A673 (cell line): ENCODE measurements at regions of chr21 and their contacts with region 1.

Region 1: GRCh38 chr21:42469272-42469671 is 26.8 kb downstream of the RSPH1 start:
- DNase-seq: no peak
- H3K4me3 ChIP-seq: no peak overlapping the region
- H3K27ac ChIP-seq: peak overlapping the region; percentile 15
- H3K4me1 ChIP-seq: peaks cover 38% of the 10 kb centered on the region
- H3K27me3 ChIP-seq: no peaks in the 10 kb centered on the region
- CTCF ChIP-seq: no peak

Region 2: DNA sequence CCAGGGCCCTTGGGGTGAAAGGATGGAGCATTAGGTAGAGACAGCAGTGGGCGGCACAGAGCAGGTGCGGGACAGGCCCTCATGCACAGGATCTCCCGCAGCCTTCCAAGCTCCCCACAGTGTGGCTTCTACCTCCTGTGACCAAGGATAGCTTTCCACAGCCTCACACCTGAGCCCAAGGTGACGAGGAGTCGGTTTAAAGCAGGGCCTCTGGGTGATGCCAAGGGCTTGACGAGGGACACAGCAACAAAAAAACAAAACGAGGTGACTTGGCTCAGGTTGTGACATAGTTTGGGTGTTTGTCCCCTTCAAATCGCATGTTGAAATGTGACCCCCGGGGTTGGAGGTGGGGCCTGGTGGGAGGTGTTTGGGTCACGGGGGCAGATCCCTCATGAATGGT is 11.5 kb after region 1 on chr21:
- CTCF ChIA-PET with region 1: no interaction called
- POLR2A ChIA-PET with region 1: no interaction called
- intact Hi-C with region 1: loop called (anchors 1 kb)
- DNase-seq: no peak
- H3K4me3 ChIP-seq: no peak overlapping the region
- H3K27ac ChIP-seq: no peak overlapping the region
- H3K4me1 ChIP-seq: no peaks in the 10 kb centered on the region
- H3K27me3 ChIP-seq: no peaks in the 10 kb centered on the region
- CTCF ChIP-seq: no peak

Region 3: DNA sequence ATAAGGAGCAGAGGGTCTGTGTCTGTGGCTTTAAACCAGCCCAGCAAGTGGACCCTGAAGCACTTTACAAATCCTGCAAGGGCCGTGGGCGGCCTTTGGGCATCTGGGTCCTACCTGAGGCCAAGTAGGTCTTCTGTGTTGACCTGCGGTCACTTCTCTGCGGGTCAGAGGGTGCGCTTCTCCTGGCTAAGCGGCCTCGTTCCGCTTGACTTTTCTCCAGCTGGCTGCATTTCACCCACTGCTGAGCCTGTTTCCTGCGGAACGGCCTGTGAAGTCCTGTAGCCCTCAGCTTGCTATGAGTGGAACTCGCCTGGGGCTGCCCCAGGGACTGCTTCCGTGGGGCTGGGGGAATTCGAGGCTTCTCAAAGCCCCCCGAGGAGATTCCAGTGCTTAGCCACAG is 87.7 kb after region 1 on chr21:
- CTCF ChIA-PET with region 1: no interaction called
- POLR2A ChIA-PET with region 1: no interaction called
- intact Hi-C with region 1: no loop called
- DNase-seq: no peak
- H3K4me3 ChIP-seq: no peak overlapping the region
- H3K27ac ChIP-seq: no peak overlapping the region
- H3K4me1 ChIP-seq: no peaks in the 10 kb centered on the region
- H3K27me3 ChIP-seq: no peaks in the 10 kb centered on the region
- CTCF ChIP-seq: no peak